A673 (cell line): ENCODE measurements at regions of chr18 and their contacts with region 1.

Region 1: GRCh38 chr18:24176727-24177416 is 38.0 kb downstream of the CABYR start:
- DNase-seq: peak; percentile 74
- H3K4me3 ChIP-seq: no peak overlapping the region
- H3K27ac ChIP-seq: no peak overlapping the region
- H3K4me1 ChIP-seq: no peaks in the 10 kb centered on the region
- H3K27me3 ChIP-seq: no peaks in the 10 kb centered on the region
- CTCF ChIP-seq: peak; percentile 88

Region 2: DNA sequence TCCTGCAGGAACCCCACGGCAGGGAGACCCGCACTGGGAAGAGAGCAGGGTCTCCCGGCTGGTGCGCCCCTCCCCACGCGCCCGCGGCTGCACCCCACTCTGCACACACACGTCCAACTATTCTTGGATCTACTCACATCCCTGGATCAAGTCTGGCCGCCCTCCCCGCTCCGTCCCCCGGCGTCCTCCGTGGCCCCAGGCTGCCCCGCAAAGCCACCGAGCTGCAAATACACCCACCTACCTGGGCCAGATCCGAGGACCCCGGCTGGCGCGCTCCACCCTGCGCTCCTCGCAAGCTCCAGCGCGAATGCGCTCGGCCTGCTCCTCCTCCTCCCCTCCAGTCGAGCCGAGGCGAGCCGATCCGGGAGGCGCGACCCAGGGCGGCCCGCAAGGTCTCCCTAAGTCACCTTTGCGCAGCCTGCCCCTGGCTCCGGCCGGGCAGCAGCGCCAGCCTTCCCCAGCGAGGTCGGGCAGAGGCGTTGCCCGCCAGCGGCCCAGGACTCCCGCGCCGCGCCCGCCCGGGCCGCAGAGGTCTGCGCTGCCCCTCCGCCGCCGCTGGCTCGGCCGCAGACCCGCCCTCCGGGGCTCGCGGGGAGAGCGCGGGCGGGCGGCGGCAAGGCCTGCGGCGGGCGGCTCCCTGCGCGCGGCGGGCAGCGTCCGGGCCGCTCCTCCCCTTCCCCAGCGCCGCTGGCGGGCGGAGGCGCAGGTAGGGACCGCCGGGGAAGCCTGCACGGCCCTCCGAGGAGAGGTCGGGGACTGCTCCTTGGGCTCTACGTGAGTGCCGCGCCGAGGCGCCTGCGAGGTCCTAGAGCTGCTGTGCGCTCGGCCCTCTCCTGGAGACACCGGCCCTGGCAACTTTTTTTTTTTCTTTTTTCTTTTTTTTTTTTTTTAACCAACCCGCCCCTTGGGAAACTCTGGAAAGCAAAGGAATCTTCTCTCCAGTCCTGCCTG is 94.8 kb after region 1 on chr18:
- CTCF ChIA-PET with region 1: interaction called, 12 read pairs
- POLR2A ChIA-PET with region 1: no interaction called
- intact Hi-C with region 1: loop called (anchors 2 kb)
- DNase-seq: peak; percentile 81
- H3K4me3 ChIP-seq: peak overlapping the region; percentile 61
- H3K27ac ChIP-seq: no peak overlapping the region
- H3K4me1 ChIP-seq: peaks cover 10% of the 10 kb centered on the region
- H3K27me3 ChIP-seq: no peaks in the 10 kb centered on the region
- CTCF ChIP-seq: 0 out of 2 replicates have a peak, but pooled peaks have one; percentile 17

Region 3: GRCh38 chr18:24488824-24489493 is 312.1 kb after region 1 on chr18:
- CTCF ChIA-PET with region 1: interaction called, 18 read pairs
- POLR2A ChIA-PET with region 1: no interaction called
- intact Hi-C with region 1: loop called (anchors 2 kb)
- DNase-seq: peak; percentile 59
- H3K4me3 ChIP-seq: no peak overlapping the region
- H3K27ac ChIP-seq: no peak overlapping the region
- H3K4me1 ChIP-seq: no peaks in the 10 kb centered on the region
- H3K27me3 ChIP-seq: peaks cover 5% of the 10 kb centered on the region
- CTCF ChIP-seq: peak; percentile 73